PC-9 (cell line): ENCODE measurements at regions of chr12 and their contacts with region 1.

Region 1: DNA sequence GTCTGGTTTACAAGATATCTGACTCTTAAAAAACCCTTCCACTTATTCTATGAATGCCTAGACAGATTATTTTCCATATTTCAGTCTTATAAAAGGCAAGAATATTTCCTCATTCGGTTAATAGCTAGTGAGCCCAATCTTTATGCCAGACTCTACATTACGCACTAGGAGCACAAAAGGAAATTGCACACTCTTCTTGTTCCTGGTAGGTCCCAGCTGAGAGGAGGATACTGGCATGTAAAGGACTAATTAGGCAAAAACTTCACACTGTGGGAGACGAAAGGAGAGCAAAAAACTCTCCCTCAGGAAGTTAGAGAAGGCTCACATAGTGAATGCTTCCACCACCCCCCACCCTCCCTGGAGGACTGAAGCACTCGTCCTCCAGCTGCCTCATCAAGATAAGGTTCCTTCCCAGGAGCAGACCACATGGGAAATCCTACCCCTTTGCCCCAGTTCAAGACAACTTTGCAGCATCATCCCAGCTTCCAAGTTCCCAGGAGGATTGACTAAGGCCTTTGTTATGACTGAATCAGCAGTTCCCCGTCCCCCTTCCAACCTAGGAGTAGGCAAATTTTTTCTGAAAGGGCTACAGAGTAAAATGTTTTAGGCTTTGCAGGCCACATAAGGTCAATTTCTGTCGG is 14.5 kb downstream of the CAPZA3 start:
- DNase-seq: peak in 1 of 2 experiments; percentile 33
- H3K4me3 ChIP-seq: no peak overlapping the region
- H3K27ac ChIP-seq: no peak overlapping the region
- H3K4me1 ChIP-seq: 0 out of 2 replicates have a peak, but pooled peaks cover 12% of the 10 kb centered on the region
- H3K27me3 ChIP-seq: no peaks in the 10 kb centered on the region
- CTCF ChIP-seq: no peak

Region 2: DNA sequence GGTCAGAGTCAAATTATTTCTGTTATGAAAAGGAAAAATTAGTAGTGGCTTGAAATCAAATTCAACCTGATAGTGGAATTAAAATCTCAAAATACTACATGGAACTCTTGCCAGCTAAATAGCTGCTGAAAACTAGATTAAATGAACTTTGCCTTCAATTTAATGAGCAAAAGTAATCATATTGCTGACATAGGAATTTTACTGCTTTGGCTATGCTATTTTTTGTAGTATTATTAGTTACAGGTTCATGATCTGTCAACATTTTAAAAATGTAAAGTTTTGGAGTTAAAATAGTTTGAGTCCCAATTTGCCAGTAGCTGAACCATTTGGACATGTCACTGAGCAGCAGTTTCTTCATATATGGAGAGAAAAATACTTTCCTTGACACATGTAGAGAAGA is 743.8 kb before region 1 on chr12:
- CTCF ChIA-PET with region 1: no interaction called
- POLR2A ChIA-PET with region 1: no interaction called
- intact Hi-C with region 1: no loop called
- DNase-seq: no peak
- H3K4me3 ChIP-seq: no peak overlapping the region
- H3K27ac ChIP-seq: no peak overlapping the region
- H3K4me1 ChIP-seq: no peaks in the 10 kb centered on the region
- H3K27me3 ChIP-seq: no peaks in the 10 kb centered on the region
- CTCF ChIP-seq: no peak

Region 3: DNA sequence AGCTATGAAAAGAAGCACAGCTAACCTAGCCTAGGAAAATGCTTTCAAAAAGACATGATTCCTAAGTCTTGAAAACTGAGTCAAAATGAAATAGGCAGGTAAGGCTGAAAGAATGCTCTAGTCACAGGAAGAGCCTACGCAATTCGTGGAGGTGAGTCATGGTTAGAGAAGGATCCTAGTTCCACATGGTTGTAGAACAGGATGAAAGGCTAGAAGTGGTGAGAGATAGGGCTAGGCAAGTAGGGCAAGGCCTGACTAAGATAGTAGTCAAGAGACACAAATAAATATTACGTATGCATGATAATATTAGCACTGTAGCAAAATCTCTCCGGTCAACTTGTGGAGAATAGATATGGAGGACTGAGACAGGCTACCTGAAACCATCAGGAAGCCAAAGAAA is 61.7 kb before region 1 on chr12:
- CTCF ChIA-PET with region 1: no interaction called
- POLR2A ChIA-PET with region 1: interaction called, 3 read pairs
- intact Hi-C with region 1: loop called (anchors 1 kb)
- DNase-seq: peak; percentile 55 to 68
- H3K4me3 ChIP-seq: no peak overlapping the region
- H3K27ac ChIP-seq: peak overlapping the region; percentile 59
- H3K4me1 ChIP-seq: peaks cover 15% of the 10 kb centered on the region
- H3K27me3 ChIP-seq: no peaks in the 10 kb centered on the region
- CTCF ChIP-seq: no peak

Region 4: DNA sequence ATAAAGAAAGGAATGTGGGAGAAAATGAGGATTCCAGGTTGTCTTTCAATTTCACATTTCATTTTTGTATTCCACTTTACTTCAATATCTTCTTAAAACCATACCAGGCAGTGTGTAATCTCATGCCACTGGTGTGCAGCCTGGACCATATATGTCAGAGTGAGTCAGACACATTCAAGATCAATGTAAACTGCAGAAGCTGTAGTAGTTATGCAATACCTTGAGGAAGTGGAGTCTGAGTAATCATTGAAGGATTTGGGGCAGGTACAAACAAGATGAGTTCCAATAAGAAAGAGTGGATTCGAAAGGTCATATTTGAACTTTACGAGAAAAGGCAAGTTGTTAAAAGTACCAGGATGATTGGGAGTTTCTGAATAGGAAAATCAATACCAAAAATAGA is 28.6 kb before region 1 on chr12:
- CTCF ChIA-PET with region 1: no interaction called
- POLR2A ChIA-PET with region 1: no interaction called
- intact Hi-C with region 1: loop called (anchors 1 kb)
- DNase-seq: peak; percentile 39 to 74
- H3K4me3 ChIP-seq: no peak overlapping the region
- H3K27ac ChIP-seq: no peak overlapping the region
- H3K4me1 ChIP-seq: peaks cover 4% of the 10 kb centered on the region; the same call in 1 of the 2 replicates
- H3K27me3 ChIP-seq: no peaks in the 10 kb centered on the region
- CTCF ChIP-seq: no peak

Region 5: DNA sequence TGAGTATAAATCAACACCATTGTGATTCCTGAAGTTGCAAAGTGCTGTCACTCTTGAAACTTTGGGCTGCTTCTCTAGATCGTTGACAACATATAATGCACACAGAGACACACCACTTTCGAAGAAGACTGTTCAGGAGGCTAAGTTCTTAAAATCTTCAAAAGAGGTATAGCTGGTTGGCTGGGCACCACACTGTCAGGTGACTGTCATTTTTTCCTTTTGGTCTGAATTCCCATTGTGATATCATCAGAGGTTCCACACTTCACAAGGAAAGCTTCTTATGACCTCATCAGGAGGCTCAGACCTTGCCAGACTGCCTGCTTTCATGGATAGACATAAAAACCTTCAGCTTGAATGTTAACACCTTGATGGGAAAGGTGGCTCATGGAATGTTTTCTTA is 14.6 kb before region 1 on chr12 and contains the starts of genes CAPZA3 and PLCZ1:
- CTCF ChIA-PET with region 1: no interaction called
- POLR2A ChIA-PET with region 1: no interaction called
- intact Hi-C with region 1: no loop called
- DNase-seq: no peak
- H3K4me3 ChIP-seq: no peak within 1 kb of the TSS
- H3K27ac ChIP-seq: no peak within 1 kb of the TSS
- H3K4me1 ChIP-seq: no peaks in the 10 kb centered on the region
- H3K27me3 ChIP-seq: no peaks in the 10 kb centered on the region
- CTCF ChIP-seq: no peak
- total RNA-seq, gene CAPZA3: not detected in 2 replicates
- total RNA-seq, gene PLCZ1: not detected in 2 replicates